Gastrocnemius medialis (tissue), 4 donors: ENCODE measurements at regions of chr3 and their contacts with region 1.

Region 1: DNA sequence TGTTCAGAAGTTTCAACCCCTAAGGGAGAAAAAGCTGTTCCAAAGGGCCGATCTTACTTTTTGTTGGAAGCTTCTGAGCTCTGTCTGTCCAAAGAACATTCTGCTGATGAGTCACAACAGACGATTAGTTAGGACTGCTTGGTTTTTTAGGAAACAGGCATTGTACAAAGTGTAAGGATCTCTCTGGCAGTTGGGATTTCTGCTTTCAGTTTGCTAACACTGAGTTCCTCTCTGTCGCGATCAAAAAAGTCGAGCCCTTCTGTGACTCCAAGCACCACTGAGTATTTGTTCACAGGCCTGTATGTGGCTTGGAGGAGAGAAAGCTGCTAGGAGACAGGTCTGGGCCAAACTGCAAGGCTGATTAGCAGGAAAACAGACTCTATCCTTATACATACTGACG is 91.8 kb upstream of the PFN2 start:
- DNase-seq: peak in 1 of 2 donors; percentile 45
- ATAC-seq: peak; percentile 42 to 55
- H3K4me3 ChIP-seq: peak overlapping the region; percentile 2 to 29 (median 16)
- H3K27ac ChIP-seq: peak overlapping the region; percentile 92 to 95 (median 94)
- H3K4me1 ChIP-seq: peaks cover 40 to 65% of the 10 kb centered on the region in 2 donors
- H3K27me3 ChIP-seq: no peaks in the 10 kb centered on the region
- CTCF ChIP-seq: no peak
- POLR2A ChIP-seq: peak in 1 of 2 donors; percentile 52

Region 2: DNA sequence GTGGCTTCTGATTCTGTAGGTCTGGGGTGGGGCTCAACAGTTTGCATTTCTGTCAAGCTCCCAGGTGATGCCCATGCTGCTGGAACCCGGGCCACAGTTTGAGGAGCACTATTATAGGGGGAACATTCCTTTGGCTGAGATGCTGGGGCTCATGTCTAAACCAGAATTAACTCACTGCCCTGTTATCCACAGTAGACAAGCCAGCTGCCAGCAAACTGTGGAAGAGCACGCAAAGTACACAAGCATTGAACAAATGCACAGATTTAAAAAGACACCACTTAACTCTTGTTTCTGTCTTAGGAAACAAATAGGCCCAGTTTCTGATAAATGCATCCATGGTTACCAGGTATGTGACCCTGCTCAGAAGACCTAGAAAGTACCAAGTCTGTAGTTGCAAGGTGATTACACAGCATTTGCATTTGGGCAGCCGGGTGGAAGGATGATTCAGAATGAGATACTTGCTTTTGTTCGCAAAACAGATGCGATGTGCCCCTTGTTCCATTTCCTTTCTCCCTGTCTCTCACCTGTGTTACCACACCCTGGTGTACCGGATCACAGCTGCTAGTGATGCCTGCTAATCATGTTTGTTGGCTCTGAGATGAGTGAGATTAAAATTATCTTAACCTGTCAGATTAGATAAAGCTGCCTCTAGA is 1058.7 kb before region 1 on chr3:
- in situ Hi-C with region 1: loop called in 1 of 4 experiments (anchors 25 kb)
- intact Hi-C with region 1: no loop called
- DNase-seq: no peak
- ATAC-seq: peak in 1 of 2 donors; percentile 6
- H3K4me3 ChIP-seq: no peak overlapping the region
- H3K27ac ChIP-seq: peak overlapping the region; percentile 98 to 100 (median 100)
- H3K4me1 ChIP-seq: peaks cover 77 to 91% of the 10 kb centered on the region in 2 donors
- H3K27me3 ChIP-seq: no peaks in the 10 kb centered on the region
- CTCF ChIP-seq: no peak
- POLR2A ChIP-seq: no peak

Region 3: GRCh38 chr3:149009732-149010131 is 1052.8 kb before region 1 on chr3:
- in situ Hi-C with region 1: loop called in 1 of 4 experiments (anchors 25 kb)
- intact Hi-C with region 1: loop called (anchors 10 kb)
- DNase-seq: no peak
- ATAC-seq: peak in 1 of 2 donors; percentile 10
- H3K4me3 ChIP-seq: no peak overlapping the region
- H3K27ac ChIP-seq: peak overlapping the region; percentile 98 to 100 (median 100)
- H3K4me1 ChIP-seq: peaks cover 87 to 88% of the 10 kb centered on the region in 2 donors
- H3K27me3 ChIP-seq: no peaks in the 10 kb centered on the region
- CTCF ChIP-seq: no peak
- POLR2A ChIP-seq: no peak

Region 4: DNA sequence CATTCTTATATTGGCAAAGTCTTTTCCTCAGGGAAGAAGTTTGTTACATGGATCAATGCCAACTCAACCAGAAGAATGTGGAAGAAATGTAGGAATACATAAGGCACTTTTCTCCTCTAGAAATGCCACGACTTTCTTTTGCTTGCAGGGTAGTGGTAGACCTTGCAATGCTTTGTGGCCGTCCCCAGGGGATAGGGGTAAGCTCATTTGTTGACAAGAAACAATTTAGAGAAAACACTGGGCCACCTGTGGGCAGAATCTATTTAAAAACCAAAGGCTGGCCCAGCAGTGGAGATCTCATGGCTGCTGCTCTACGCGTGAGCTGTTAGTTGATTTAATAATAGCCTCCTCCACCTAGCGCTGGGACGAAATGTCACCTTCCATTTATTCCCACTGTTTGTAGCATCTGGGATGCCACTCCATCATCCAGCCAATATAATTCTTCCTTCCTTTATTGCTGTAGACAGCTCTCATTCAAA is 27.2 kb before region 1 on chr3:
- in situ Hi-C with region 1: no loop called
- intact Hi-C with region 1: loop called (anchors 2 kb)
- DNase-seq: peak; percentile 75 to 77
- ATAC-seq: peak; percentile 77 to 87
- H3K4me3 ChIP-seq: peak overlapping the region in 1 of 4 donors; percentile 18
- H3K27ac ChIP-seq: peak overlapping the region; percentile 91 to 98 (median 94)
- H3K4me1 ChIP-seq: peaks cover 17 to 31% of the 10 kb centered on the region in 2 donors
- H3K27me3 ChIP-seq: no peaks in the 10 kb centered on the region
- CTCF ChIP-seq: peak in 2 of 5 experiments; percentile 19 to 25
- POLR2A ChIP-seq: no peak

Region 5: GRCh38 chr3:150094150-150094925 is 31.8 kb after region 1 on chr3:
- in situ Hi-C with region 1: no loop called
- intact Hi-C with region 1: loop called (anchors 1 kb)
- DNase-seq: peak; percentile 91 to 95
- ATAC-seq: peak; percentile 79 to 88
- H3K4me3 ChIP-seq: peak overlapping the region in 1 of 4 donors; percentile 24
- H3K27ac ChIP-seq: peak overlapping the region; percentile 82 to 97 (median 90)
- H3K4me1 ChIP-seq: peaks cover 35 to 60% of the 10 kb centered on the region in 2 donors
- H3K27me3 ChIP-seq: no peaks in the 10 kb centered on the region
- CTCF ChIP-seq: peak in 2 of 5 experiments; percentile 5 to 15
- POLR2A ChIP-seq: peak; percentile 31 to 55

Region 6: GRCh38 chr3:150146991-150147761 is 84.7 kb after region 1 on chr3:
- in situ Hi-C with region 1: no loop called
- intact Hi-C with region 1: loop called (anchors 1 kb)
- DNase-seq: peak; percentile 84 to 91
- ATAC-seq: peak; percentile 62 to 63
- H3K4me3 ChIP-seq: peak overlapping the region; percentile 1 to 21 (median 4)
- H3K27ac ChIP-seq: peak overlapping the region; percentile 85 to 97 (median 94)
- H3K4me1 ChIP-seq: peaks cover 53 to 66% of the 10 kb centered on the region in 2 donors
- H3K27me3 ChIP-seq: no peaks in the 10 kb centered on the region
- CTCF ChIP-seq: no peak
- POLR2A ChIP-seq: peak in 1 of 2 donors; percentile 19